GM12878 (cell line): ENCODE measurements at regions of chr20 and their contacts with region 1.

Region 1: GRCh38 chr20:39874049-39874888 is 814.8 kb downstream of the MAFB start:
- DNase-seq: peak; percentile 60
- ATAC-seq: peak; percentile 99
- H3K4me3 ChIP-seq: no peak overlapping the region
- H3K27ac ChIP-seq: no peak overlapping the region
- H3K4me1 ChIP-seq: no peaks in the 10 kb centered on the region; the same call in 1 of the 2 replicates
- H3K27me3 ChIP-seq: no peaks in the 10 kb centered on the region
- CTCF ChIP-seq: peak; percentile 86 to 98 (median 91)
- EP300 ChIP-seq: no peak
- POLR2A ChIP-seq: no peak
- RAD21 ChIP-seq: peak; percentile 91

Region 2: DNA sequence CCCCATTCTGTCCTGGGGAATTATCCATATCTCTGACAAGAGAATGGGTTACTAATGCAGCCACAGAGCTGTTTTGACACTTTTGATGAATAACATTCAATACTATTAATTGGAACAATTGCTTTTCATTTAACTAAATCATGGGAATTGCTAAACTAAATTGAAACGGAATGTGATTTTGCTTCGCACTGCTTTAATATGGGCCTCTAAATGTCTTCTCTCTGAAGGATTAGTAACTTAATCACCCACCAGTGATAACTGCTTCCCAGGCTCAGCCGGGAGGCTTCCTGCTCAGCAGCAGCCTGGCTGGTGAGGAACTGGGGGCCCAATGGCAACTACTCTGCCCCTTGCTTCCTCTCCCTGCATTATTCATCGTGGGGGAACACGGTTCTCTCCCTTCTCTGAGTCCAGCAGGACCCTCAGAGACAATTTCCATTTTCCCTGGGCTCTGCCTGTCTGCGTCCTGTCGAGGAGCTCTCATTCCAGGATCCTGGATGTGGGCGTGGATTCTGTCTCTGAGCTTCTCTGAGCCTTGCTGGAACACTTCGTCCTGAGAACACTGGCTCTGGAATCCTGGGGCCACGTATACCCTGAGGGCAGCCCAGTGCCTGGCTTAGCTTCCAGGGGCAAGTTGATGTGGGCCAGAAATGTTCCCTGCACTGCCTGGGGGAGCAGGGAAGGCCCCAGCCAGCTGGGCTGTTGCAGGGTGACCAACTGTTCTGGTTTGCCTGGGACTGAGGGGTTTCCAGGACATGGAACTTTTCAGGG is 603.2 kb before region 1 on chr20:
- CTCF ChIA-PET with region 1: interaction called, 88 read pairs
- POLR2A ChIA-PET with region 1: no interaction called
- RAD21 ChIA-PET with region 1: interaction called, 43 read pairs
- SMC1A ChIA-PET with region 1: interaction called, 22 read pairs
- in situ Hi-C with region 1: loop called (anchors 5 kb)
- intact Hi-C with region 1: loop called (anchors 1 kb)
- DNase-seq: no peak
- ATAC-seq: no peak
- H3K4me3 ChIP-seq: no peak overlapping the region
- H3K27ac ChIP-seq: no peak overlapping the region
- H3K4me1 ChIP-seq: no peaks in the 10 kb centered on the region
- H3K27me3 ChIP-seq: no peaks in the 10 kb centered on the region; a peak in 1 of 4 replicates
- CTCF ChIP-seq: no peak
- EP300 ChIP-seq: no peak
- POLR2A ChIP-seq: no peak
- RAD21 ChIP-seq: no peak

Region 3: DNA sequence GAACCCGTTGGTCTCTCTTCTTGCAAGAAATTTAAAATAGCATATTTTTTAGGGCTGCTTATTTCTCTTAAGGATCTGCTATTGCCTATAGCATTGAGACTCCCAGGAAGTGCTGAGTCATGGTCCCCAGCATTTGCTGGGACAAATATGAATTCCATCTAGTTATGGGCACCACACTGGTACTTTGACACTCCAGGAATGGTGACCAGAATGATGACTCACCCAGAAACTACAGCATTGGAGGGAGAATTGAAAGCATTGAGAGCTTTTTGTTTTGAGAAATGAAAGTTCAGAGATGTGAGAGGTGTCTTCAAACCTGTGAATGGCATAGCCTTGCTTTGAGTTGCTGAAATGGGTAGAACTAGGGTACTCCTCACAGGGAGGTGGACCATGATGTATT is 212.4 kb before region 1 on chr20:
- CTCF ChIA-PET with region 1: interaction called, 21 read pairs
- POLR2A ChIA-PET with region 1: no interaction called
- RAD21 ChIA-PET with region 1: interaction called, 11 read pairs
- SMC1A ChIA-PET with region 1: interaction called, 10 read pairs
- in situ Hi-C with region 1: no loop called
- intact Hi-C with region 1: no loop called
- DNase-seq: no peak
- ATAC-seq: no peak
- H3K4me3 ChIP-seq: no peak overlapping the region
- H3K27ac ChIP-seq: no peak overlapping the region
- H3K4me1 ChIP-seq: no peaks in the 10 kb centered on the region
- H3K27me3 ChIP-seq: no peaks in the 10 kb centered on the region
- CTCF ChIP-seq: no peak
- EP300 ChIP-seq: no peak
- POLR2A ChIP-seq: no peak
- RAD21 ChIP-seq: no peak

Region 4: DNA sequence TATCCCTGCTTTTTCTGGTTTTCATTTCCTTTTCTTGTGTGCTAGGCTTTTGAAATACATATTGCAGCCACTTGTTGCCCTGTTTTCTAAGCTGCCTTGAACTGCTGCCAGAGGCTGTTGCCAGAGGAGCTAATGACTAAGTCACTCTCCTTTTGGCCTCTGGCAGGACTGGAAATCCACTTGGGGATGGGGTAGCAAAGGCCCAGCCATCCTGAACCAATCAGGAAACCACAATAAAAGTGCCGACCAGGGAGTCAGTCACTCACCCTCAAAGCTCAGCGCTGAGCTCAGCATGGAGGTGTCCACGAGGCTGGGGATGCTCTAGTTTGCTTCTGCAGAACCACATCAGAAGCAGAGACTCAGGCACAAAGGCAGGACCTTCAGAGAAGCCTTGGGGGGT is 99.2 kb before region 1 on chr20:
- CTCF ChIA-PET with region 1: interaction called, 11 read pairs
- POLR2A ChIA-PET with region 1: no interaction called
- RAD21 ChIA-PET with region 1: interaction called, 4 read pairs
- SMC1A ChIA-PET with region 1: interaction called, 18 read pairs
- in situ Hi-C with region 1: no loop called
- intact Hi-C with region 1: loop called (anchors 10 kb)
- DNase-seq: no peak
- ATAC-seq: no peak
- H3K4me3 ChIP-seq: no peak overlapping the region
- H3K27ac ChIP-seq: no peak overlapping the region
- H3K4me1 ChIP-seq: no peaks in the 10 kb centered on the region
- H3K27me3 ChIP-seq: no peaks in the 10 kb centered on the region
- CTCF ChIP-seq: no peak
- EP300 ChIP-seq: no peak
- POLR2A ChIP-seq: no peak
- RAD21 ChIP-seq: no peak

Region 5: GRCh38 chr20:39849664-39850063 is 24.6 kb before region 1 on chr20:
- CTCF ChIA-PET with region 1: interaction called, 21 read pairs
- POLR2A ChIA-PET with region 1: no interaction called
- RAD21 ChIA-PET with region 1: interaction called, 11 read pairs
- SMC1A ChIA-PET with region 1: interaction called, 15 read pairs
- in situ Hi-C with region 1: no loop called
- intact Hi-C with region 1: no loop called
- DNase-seq: no peak
- ATAC-seq: no peak
- H3K4me3 ChIP-seq: no peak overlapping the region
- H3K27ac ChIP-seq: no peak overlapping the region
- H3K4me1 ChIP-seq: no peaks in the 10 kb centered on the region; the same call in 1 of the 2 replicates
- H3K27me3 ChIP-seq: no peaks in the 10 kb centered on the region
- CTCF ChIP-seq: no peak
- EP300 ChIP-seq: no peak
- POLR2A ChIP-seq: no peak
- RAD21 ChIP-seq: no peak

Region 6: GRCh38 chr20:39939241-39939865 is 65.1 kb after region 1 on chr20:
- CTCF ChIA-PET with region 1: no interaction called
- POLR2A ChIA-PET with region 1: no interaction called
- RAD21 ChIA-PET with region 1: no interaction called
- SMC1A ChIA-PET with region 1: no interaction called
- in situ Hi-C with region 1: no loop called
- intact Hi-C with region 1: no loop called
- DNase-seq: no peak
- ATAC-seq: no peak
- H3K4me3 ChIP-seq: no peak overlapping the region
- H3K27ac ChIP-seq: no peak overlapping the region
- H3K4me1 ChIP-seq: no peaks in the 10 kb centered on the region
- H3K27me3 ChIP-seq: no peaks in the 10 kb centered on the region; a peak in 1 of 4 replicates
- CTCF ChIP-seq: no peak
- EP300 ChIP-seq: no peak
- POLR2A ChIP-seq: no peak
- RAD21 ChIP-seq: no peak

Region 7: GRCh38 chr20:40010483-40010882 is 136.2 kb after region 1 on chr20:
- CTCF ChIA-PET with region 1: no interaction called
- POLR2A ChIA-PET with region 1: no interaction called
- RAD21 ChIA-PET with region 1: no interaction called
- SMC1A ChIA-PET with region 1: no interaction called
- in situ Hi-C with region 1: no loop called
- intact Hi-C with region 1: no loop called
- DNase-seq: no peak
- ATAC-seq: no peak
- H3K4me3 ChIP-seq: no peak overlapping the region
- H3K27ac ChIP-seq: no peak overlapping the region
- H3K4me1 ChIP-seq: no peaks in the 10 kb centered on the region
- H3K27me3 ChIP-seq: no peaks in the 10 kb centered on the region; a peak in 1 of 4 replicates
- CTCF ChIP-seq: no peak
- EP300 ChIP-seq: no peak
- POLR2A ChIP-seq: no peak
- RAD21 ChIP-seq: no peak